ENCODE measurements at regions of chr20 and their contacts with region 1.

Region 1: DNA sequence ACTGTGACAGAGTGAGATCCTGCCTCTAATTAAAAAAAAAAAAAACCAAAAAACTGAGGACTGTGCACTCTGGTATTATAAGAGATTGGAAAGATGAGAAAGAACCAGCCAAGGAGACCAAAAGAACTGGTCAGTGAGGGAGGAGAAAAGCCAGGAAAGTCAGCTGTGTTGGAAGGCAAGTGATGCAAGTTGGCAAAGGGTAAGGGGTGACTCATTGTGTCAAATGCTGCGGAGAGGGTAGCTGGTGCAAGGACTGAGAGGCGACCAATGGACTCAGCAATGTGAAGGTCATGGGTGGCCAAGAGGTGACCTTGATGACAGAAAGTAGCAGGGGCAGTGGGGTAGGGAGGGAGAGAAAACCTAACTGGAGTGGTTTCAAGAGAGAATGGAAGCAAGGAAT is 27.4 kb upstream of the LRRN4 start:
- DNase-seq: no peak
- ATAC-seq: no peak
- H3K4me3 ChIP-seq: no peak overlapping the region
- H3K27ac ChIP-seq: no peak overlapping the region
- H3K4me1 ChIP-seq: no peaks in the 10 kb centered on the region
- H3K27me3 ChIP-seq: no peaks in the 10 kb centered on the region

Region 2: GRCh38 chr20:5529331-5530148 is 551.7 kb before region 1 on chr20:
- intact Hi-C with region 1: loop called (anchors 5 kb)
- DNase-seq: peak; percentile 88 to 95
- ATAC-seq: peak; percentile 95
- H3K4me3 ChIP-seq: no peak overlapping the region
- H3K27ac ChIP-seq: no peak overlapping the region
- H3K4me1 ChIP-seq: no peaks in the 10 kb centered on the region
- H3K27me3 ChIP-seq: no peaks in the 10 kb centered on the region

Region 3: GRCh38 chr20:6164421-6165341 is 83.4 kb after region 1 on chr20:
- intact Hi-C with region 1: no loop called
- DNase-seq: no peak
- ATAC-seq: peak; percentile 54
- H3K4me3 ChIP-seq: no peak overlapping the region
- H3K27ac ChIP-seq: peak overlapping the region in 1 of 2 donors; percentile 10
- H3K4me1 ChIP-seq: peaks cover 2 to 7% of the 10 kb centered on the region in 2 donors
- H3K27me3 ChIP-seq: no peaks in the 10 kb centered on the region